Mucosa of descending colon (tissue), 3 donors: ENCODE measurements at regions of chr4 and their contacts with region 1.

Region 1: DNA sequence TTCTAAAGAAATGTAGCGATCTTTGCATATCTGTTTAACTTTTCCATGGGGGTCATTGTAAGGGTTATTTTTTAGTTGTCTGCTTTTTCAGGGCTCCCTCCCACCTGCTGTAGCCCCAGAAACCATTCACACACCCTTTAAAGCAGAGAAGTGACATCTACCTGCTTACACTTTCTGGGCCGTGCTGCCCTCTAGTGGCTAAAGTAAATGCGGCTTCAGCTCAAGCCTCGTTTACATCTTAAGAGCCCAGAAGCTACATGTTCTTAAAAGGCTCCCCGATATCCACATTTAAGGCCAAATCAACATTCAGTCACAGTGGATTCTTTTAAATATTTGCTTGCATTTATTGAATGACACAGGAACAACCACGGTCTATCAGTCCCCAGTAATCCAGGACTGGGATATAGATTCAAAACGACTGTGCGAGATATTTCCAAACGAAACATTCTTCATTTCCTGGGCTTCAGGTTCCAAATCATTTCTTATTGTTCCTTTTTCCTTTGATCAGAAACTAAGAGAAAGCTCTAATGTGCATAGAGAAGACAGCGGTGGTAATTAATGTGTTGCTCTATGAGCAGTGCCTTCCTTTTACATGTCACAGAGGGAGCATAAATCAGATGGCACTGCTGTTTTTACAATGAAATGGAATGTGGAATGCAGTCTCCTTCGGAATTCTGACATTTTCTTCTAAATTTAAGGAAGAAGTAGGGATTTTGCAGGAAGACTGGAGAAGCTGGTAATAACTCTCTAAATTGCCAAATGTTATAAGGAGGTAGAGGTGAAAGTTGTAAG is 119.9 kb downstream of the RASGEF1B start:
- DNase-seq: peak in 2 of 3 donors; percentile 68 to 91
- ATAC-seq: peak; percentile 83
- H3K4me3 ChIP-seq: no peak overlapping the region
- H3K4me1 ChIP-seq: no peaks in the 10 kb centered on the region
- CTCF ChIP-seq: peak; percentile 81

Region 2: GRCh38 chr4:81069706-81070331 is 282.0 kb before region 1 on chr4:
- intact Hi-C with region 1: loop called (anchors 5 to 10 kb)
- DNase-seq: peak in 1 of 3 donors; percentile 86
- ATAC-seq: peak; percentile 95
- H3K4me3 ChIP-seq: no peak overlapping the region
- H3K4me1 ChIP-seq: no peaks in the 10 kb centered on the region
- CTCF ChIP-seq: peak; percentile 75

Region 3: DNA sequence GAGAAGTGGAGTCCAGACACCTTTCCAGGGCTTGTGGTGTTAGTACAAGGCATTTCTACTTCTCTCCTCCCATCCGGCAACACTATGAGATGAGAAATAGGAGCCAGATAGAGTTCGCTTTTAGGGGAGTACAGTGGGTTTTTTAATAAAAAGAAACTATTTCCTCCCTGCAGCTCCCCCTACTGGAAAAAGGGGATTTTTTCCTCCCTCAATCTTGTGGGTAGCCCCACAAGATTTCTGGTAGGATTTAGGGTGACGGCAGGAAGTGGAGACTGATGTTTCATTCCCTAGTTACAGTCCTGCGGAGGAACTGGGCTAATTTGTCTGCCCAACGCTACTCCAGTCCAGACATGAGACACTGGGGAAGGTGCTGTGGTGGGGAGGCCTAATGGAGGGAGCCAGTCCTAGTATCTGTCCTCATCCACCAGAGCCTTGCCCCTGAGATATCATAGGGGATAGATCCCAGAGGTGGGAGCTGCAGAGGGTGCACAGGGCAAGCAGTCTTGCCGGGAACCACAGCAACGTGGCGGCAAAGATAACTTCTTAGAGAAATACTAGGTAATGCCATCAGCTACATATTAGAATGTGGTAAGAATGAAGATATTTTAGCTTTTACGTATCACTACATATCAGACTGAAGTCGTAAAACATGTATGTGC is 91.3 kb before region 1 on chr4:
- intact Hi-C with region 1: no loop called
- DNase-seq: peak in 1 of 3 donors; percentile 26
- ATAC-seq: no peak
- H3K4me3 ChIP-seq: no peak overlapping the region
- H3K4me1 ChIP-seq: no peaks in the 10 kb centered on the region
- CTCF ChIP-seq: no peak